ENCODE measurements at regions of chr20 and their contacts with region 1.

Region 1: GRCh38 chr20:34676642-34677373 is at the start of gene PIGU:
- DNase-seq: peak; percentile 94 to 98
- ATAC-seq: peak; percentile 97 to 100 (median 97)
- H3K4me3 ChIP-seq: peak within 1 kb of the TSS; percentile 93
- H3K4me3 Mint-ChIP-seq: peak within 1 kb of the TSS; percentile 95
- H3K27ac ChIP-seq: peak within 1 kb of the TSS; percentile 80
- H3K27ac Mint-ChIP-seq: peak within 1 kb of the TSS; percentile 85 to 90
- H3K4me1 ChIP-seq: peaks cover 9% of the 10 kb centered on the region
- H3K4me1 Mint-ChIP-seq: peaks cover 15 to 16% of the 10 kb centered on the region in 2 donors
- H3K27me3 ChIP-seq: no peaks in the 10 kb centered on the region
- H3K27me3 Mint-ChIP-seq: no peaks in the 10 kb centered on the region
- CTCF ChIP-seq: peak; percentile 29
- total RNA-seq, gene PIGU: 7.0 to 11.1 (median 8.2) TPM

Region 2: DNA sequence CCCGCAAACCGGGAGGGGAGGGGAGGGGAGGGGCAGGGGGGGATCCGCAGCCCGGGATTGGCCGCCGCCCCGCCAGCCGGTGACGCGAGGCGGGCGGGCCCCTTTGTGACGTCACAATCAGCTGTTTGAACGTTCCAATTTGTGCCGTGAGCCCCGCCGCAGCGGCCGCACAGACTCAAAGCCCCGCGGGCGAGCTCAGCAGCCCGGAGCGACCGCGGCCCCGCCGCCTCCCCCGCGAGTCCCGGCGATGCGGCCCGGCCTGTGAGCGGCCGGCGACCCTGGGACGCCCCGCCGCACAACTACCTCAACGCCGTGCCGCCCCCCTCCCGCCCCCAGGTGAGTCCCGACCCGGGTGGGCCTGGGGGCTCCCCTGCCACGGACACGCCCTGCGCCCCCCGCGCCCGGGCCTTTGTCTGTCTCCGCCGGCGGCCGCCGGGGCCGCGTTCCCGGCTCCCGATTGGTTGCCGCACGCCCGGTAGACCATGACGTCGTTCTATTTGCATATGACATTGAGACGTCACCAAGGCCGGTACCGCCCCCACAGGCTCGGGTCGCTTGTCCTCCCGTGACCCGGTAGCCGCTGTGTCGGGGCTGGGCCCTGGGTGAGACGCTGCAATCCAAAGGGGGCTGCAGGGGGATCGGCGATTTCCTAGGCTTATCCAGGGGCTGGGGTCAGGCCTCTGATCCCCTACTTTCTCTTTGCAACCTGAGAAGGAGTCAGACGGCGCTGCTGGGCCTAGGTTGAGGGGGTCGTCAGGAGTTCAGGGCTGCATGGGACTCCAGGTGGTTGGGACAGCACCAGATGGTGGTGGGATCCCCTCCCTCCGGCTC is 27.6 kb after region 1 on chr20 and contains the start of gene TP53INP2:
- intact Hi-C with region 1: loop called (anchors 2 kb)
- DNase-seq: peak; percentile 88 to 95
- ATAC-seq: peak; percentile 65 to 82 (median 71)
- H3K4me3 ChIP-seq: peak within 1 kb of the TSS; percentile 56
- H3K4me3 Mint-ChIP-seq: peak within 1 kb of the TSS; percentile 94
- H3K27ac ChIP-seq: peak within 1 kb of the TSS; percentile 56
- H3K27ac Mint-ChIP-seq: peak within 1 kb of the TSS; percentile 94 to 98
- H3K4me1 ChIP-seq: peaks cover 27% of the 10 kb centered on the region
- H3K4me1 Mint-ChIP-seq: peaks cover 16 to 27% of the 10 kb centered on the region in 2 donors
- H3K27me3 ChIP-seq: no peaks in the 10 kb centered on the region
- H3K27me3 Mint-ChIP-seq: peaks cover 0 to 12% of the 10 kb centered on the region in 2 donors
- CTCF ChIP-seq: no peak
- total RNA-seq, gene TP53INP2: 30.7 to 56.3 (median 35.9) TPM

Region 3: DNA sequence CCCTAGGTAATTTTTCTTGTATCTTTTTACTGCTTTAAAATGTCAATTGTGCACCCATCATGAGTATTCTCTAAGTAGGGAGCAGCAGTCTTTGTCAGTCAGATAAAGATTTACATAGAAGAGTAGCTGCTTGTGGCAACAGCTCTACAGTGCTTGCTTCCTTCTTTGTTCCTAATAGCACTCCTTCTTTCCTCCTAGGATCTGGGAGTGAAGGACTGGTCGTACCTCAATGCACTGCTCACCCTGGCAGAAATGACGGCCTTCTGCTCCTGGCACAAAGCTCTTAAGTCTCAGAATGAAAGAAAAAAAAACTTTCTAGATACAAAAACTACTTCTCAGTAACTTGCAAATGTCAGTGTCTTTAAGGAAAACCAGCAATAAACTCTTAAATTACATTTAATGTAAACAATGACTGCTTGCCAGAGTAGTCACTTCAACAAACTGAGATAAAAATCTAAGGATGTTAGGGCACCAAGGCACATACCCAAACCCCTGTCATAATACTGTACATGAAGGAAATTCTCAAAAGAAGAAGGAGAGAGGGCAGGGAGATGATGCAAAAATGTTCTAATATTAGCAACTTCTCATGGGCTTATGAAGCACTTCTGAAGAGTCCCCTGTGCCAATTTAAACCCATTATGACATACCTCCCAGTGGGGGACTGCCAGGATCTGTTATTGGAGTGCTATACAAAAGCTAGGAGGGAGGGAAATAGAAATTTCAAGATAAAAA is 114.6 kb after region 1 on chr20:
- intact Hi-C with region 1: no loop called
- DNase-seq: no peak
- ATAC-seq: no peak
- H3K4me3 ChIP-seq: no peak overlapping the region
- H3K4me3 Mint-ChIP-seq: no peak overlapping the region
- H3K27ac ChIP-seq: no peak overlapping the region
- H3K27ac Mint-ChIP-seq: no peak overlapping the region
- H3K4me1 ChIP-seq: no peaks in the 10 kb centered on the region
- H3K4me1 Mint-ChIP-seq: peaks cover 16 to 23% of the 10 kb centered on the region in 2 donors
- H3K27me3 ChIP-seq: no peaks in the 10 kb centered on the region
- H3K27me3 Mint-ChIP-seq: no peaks in the 10 kb centered on the region
- CTCF ChIP-seq: no peak